Tibial artery (tissue), 4 donors: ENCODE measurements at regions of chr5 and their contacts with region 1.

Region 1: DNA sequence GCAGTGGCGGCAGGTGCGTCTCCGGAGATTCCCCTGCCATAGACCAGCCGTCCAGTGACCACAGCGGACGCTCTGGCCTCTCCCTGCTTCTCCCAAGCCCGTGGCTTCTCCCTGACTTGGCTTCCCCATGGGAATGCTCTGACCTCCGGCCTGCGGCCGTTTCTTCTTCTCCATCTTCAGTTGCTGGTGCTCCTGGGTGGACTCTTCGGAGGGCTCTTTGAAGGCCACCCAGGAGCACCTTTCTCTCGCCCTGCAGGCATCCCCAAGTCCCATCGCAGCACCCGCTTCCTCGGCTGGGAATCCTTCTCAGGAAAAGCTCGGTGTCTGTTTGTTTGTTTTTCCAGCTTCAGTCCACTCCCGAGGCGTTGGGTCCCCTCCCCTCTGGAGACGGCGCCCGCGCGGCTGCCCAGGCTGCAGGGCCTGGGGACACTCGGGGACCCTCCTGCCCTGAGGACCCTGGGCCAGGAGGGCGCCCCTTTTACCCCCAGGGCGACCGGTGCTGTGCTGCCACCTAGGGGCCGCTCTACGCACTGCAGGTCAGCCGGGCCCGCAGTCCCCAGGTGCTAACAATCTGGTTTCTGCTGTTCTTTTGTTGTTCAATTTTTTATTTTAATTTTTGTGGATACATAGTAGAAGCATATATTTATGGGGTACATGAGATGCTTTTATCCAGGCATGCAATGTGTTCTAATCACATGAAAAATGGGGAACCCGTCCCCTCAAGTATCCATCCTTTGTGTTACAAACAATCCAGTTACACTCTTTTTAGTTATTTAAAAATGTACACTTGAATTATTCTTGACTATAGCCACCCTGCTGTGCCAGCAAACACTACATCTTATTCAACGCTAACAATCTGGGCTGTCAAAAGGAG is 197.9 kb upstream of the ADAMTS16 start:
- DNase-seq: no peak
- H3K4me3 ChIP-seq: no peak overlapping the region
- H3K27ac ChIP-seq: no peak overlapping the region
- H3K4me1 ChIP-seq: no peaks in the 10 kb centered on the region
- H3K27me3 ChIP-seq: peaks cover 0 to 3% of the 10 kb centered on the region in 2 donors
- CTCF ChIP-seq: peak; percentile 37 to 50

Region 2: GRCh38 chr5:4831325-4831724 is 110.9 kb before region 1 on chr5:
- intact Hi-C with region 1: no loop called
- DNase-seq: no peak
- H3K4me3 ChIP-seq: no peak overlapping the region
- H3K27ac ChIP-seq: no peak overlapping the region
- H3K4me1 ChIP-seq: no peaks in the 10 kb centered on the region
- H3K27me3 ChIP-seq: no peaks in the 10 kb centered on the region
- CTCF ChIP-seq: no peak

Region 3: DNA sequence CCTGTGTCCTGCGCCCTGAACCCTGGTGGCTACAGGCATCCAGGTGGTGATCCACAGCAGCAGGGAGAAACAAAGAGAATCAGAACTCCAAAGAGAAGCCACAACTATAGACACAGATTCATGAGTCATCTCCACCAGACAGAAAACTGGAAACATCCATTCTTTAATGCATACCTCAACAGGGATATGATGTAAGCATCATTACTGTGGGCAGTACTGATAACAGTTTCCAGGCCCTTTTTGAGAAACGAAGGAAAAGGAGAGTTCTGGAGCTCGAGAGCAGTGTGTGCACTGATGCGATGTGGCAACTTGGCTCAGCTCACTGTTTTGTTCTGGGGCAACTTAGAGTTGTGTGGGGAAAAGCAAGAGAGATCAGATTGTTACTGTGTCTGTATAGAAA is 17.6 kb before region 1 on chr5:
- intact Hi-C with region 1: loop called (anchors 1 kb)
- DNase-seq: no peak
- H3K4me3 ChIP-seq: no peak overlapping the region
- H3K27ac ChIP-seq: no peak overlapping the region
- H3K4me1 ChIP-seq: no peaks in the 10 kb centered on the region
- H3K27me3 ChIP-seq: no peaks in the 10 kb centered on the region
- CTCF ChIP-seq: no peak

Region 4: DNA sequence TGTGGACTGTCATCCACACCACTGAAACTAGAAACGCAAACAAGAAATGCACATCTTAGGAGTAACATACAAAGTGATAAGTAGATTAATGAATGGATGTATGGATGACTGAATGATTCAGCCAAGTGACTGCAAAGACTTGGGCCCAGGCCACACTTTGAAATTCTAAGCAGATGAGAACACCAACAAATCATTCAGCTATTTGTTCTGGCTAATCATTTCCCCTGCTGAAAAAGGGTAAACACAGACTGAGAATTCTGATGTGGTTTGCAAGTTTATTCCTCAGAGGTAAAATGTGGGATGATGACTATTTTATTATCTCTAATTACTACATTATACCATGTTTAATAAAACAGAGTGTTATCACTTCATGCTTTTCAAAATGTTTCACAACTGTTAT is 34.7 kb after region 1 on chr5:
- intact Hi-C with region 1: no loop called
- DNase-seq: no peak
- H3K4me3 ChIP-seq: no peak overlapping the region
- H3K27ac ChIP-seq: no peak overlapping the region
- H3K4me1 ChIP-seq: no peaks in the 10 kb centered on the region
- H3K27me3 ChIP-seq: no peaks in the 10 kb centered on the region
- CTCF ChIP-seq: no peak